Endothelial cell of umbilical vein (primary cell): ENCODE measurements at regions of chr9 and their contacts with region 1.

Region 1: GRCh38 chr9:79571309-79572031 is at the start of gene TLE4:
- DNase-seq: peak; percentile 100
- H3K4me3 ChIP-seq: peak within 1 kb of the TSS; percentile 89 to 96 (median 95)
- H3K27ac ChIP-seq: peak within 1 kb of the TSS; percentile 87
- H3K4me1 ChIP-seq: peaks cover 22% of the 10 kb centered on the region
- H3K27me3 ChIP-seq: peaks cover 2 to 8% of the 10 kb centered on the region in 2 experiments
- CTCF ChIP-seq: no peak
- POLR2A ChIP-seq: peak; percentile 97
- total RNA-seq, gene TLE4: 31.4 and 34.5 TPM in 2 replicates

Region 2: GRCh38 chr9:78296893-78297671 is 1274.4 kb before region 1 on chr9 and contains the start of gene PSAT1:
- CTCF ChIA-PET with region 1: no interaction called
- POLR2A ChIA-PET with region 1: no interaction called
- dilution Hi-C with region 1: no loop called
- intact Hi-C with region 1: loop called (anchors 5 kb)
- DNase-seq: peak; percentile 96
- H3K4me3 ChIP-seq: peak within 1 kb of the TSS; percentile 64 to 81 (median 72)
- H3K27ac ChIP-seq: peak within 1 kb of the TSS; percentile 31
- H3K4me1 ChIP-seq: peaks cover 3% of the 10 kb centered on the region
- H3K27me3 ChIP-seq: no peaks in the 10 kb centered on the region
- CTCF ChIP-seq: peak in 1 of 2 donors; percentile 5
- POLR2A ChIP-seq: peak; percentile 66
- total RNA-seq, gene PSAT1: 42.0 and 47.3 TPM in 2 replicates

Region 3: DNA sequence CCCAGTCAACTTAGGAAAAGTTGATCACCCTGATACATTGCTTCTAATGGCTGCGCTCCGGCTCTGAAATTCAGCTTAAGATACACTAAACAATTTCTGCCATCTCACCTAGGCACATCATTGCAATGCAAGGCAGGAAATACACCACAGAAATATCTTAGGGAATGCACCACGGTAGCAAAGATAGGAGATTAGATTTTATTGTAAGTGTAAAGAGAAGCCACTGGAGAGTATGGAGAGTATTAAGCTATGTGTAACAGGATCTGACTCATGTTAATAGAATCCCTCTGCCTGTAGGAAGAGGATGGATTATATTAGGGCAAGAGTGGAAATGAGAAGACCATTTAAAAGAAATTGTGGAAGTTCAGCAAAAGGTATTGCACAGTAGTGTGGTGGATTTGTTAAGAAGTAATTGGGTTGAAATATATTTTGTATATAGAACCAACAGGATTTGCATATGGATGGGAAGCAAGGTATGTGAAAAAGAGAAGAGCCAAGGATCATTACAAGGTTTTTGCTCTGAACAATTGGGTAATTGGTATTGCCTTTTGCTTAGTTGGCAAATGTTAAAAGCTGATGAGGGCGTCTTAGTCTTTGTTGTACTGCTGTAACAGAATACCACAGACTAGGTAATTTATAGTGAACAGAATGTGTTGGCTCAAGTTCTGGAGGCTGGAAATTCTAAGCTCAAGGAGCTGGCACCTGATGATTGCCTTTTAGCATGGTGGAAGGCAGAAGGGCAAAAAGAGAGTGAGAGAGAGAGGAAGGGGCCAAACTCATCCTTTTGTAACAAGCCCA is 638.4 kb before region 1 on chr9:
- CTCF ChIA-PET with region 1: no interaction called
- POLR2A ChIA-PET with region 1: no interaction called
- dilution Hi-C with region 1: no loop called
- intact Hi-C with region 1: loop called (anchors 2 kb)
- DNase-seq: peak; percentile 74
- H3K4me3 ChIP-seq: no peak overlapping the region
- H3K27ac ChIP-seq: peak overlapping the region; percentile 90
- H3K4me1 ChIP-seq: peaks cover 19% of the 10 kb centered on the region
- H3K27me3 ChIP-seq: no peaks in the 10 kb centered on the region
- CTCF ChIP-seq: no peak
- POLR2A ChIP-seq: no peak

Region 4: DNA sequence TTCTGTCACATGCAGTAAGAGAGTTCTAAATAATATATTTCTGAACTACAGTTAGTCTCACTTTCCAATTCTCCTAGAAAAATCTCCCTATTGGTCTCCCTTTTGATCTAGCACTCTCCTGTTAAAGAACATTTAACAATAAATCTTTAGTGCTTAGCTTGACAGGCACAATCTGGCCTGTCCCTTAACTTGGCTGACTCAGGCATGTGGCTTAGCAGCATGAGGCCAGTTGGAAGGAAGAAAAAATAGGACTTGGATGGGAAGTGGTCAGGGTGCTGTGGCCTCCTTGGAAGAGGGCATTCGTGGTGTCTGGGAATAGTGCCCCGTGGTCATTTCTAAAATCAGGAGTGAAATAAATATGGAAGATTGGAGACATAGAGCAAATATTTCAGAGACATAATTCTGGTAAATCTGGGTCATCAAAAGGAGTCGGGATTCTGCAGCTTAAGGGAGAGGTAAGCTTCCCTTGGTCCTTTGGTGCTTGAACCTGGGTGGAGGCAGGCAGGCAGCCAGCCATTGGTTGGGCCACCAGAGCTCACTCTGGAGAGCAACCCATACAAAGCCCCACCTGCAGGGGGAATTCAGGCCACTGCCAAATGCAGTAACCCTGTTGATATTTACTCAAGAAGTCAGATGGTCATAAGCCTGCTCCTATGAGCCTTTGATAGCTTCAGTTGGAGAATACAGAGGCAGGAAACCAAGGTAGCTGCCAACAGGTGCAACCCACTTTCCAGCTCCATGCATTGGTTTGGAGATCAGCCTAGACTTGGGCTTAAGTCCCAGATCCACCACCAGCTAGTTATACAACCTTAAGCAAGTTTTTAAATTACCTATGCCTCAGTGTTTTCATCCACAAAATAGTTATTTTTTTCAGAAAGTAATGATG is 28.5 kb before region 1 on chr9:
- CTCF ChIA-PET with region 1: no interaction called
- POLR2A ChIA-PET with region 1: no interaction called
- dilution Hi-C with region 1: no loop called
- intact Hi-C with region 1: no loop called
- DNase-seq: no peak
- H3K4me3 ChIP-seq: no peak overlapping the region
- H3K27ac ChIP-seq: no peak overlapping the region
- H3K4me1 ChIP-seq: no peaks in the 10 kb centered on the region
- H3K27me3 ChIP-seq: no peaks in the 10 kb centered on the region
- CTCF ChIP-seq: no peak
- POLR2A ChIP-seq: no peak

Region 5: DNA sequence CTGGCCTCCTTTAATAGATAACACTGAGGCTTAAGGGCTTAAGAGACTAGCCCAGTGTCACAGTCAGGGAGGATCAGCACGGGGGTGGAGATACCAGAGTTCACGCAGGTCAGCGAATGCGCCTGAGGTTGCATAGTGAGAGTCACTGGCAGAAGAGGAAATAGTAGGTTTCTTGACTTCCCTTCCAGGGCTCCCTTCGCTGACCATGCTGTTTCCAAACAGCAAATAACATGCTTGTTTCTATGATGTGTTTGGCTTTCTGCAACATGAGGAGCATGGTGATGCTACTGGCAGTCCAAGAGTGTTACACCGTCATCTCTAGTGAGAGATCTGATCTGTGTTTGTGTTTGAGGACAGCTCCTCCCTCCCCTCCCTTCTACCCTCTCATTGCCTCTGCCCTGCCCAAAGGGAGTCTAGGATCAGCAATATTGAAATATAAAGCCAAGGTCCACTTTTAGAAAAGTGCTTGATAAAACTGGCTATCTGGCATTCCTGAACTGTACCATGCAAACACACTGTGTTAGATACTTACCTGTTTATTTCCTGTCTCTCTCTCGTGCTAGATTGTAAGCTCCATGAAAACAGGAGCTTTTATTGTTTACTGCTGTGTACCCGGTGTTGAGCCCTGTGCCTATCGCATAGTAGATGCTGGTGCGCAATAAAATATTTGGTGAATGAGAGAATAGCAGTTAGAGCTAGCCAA is 12.6 kb after region 1 on chr9:
- CTCF ChIA-PET with region 1: interaction called, 5 read pairs
- POLR2A ChIA-PET with region 1: interaction called, 29 read pairs
- dilution Hi-C with region 1: no loop called
- intact Hi-C with region 1: loop called (anchors 1 kb)
- DNase-seq: no peak
- H3K4me3 ChIP-seq: no peak overlapping the region
- H3K27ac ChIP-seq: no peak overlapping the region
- H3K4me1 ChIP-seq: peaks cover 20% of the 10 kb centered on the region
- H3K27me3 ChIP-seq: no peaks in the 10 kb centered on the region
- CTCF ChIP-seq: no peak
- POLR2A ChIP-seq: no peak

Region 6: DNA sequence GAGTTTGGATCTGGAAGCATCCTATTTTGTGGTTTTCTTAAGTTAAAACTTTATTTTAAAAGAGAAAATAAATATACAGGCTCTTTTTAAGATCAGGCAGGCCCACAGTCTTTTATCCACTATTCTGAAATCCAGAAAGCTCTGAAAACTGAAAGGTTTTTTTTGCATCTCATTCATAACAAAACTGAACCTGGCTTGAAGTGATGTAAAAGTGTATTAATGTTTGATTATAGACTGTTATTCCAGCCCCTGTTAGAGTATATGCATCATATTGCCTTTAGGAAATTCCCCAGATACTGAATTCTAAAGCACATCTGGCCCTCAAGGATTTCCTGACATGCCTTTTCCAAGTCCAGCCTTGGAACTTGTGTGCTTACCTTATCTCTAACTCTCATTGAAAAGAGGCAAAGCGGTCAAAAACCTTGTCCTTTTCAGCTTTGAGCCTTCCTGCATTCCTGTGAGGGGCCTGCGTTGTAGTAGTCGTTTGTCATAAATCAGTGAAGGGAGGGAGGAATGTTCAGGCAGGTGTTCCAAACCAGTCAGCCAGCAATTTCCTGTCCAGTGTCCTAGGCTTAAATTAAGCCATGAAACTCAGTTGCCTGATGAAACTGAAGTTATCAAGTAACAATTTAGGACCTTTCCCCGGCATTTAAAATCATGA is 110.7 kb after region 1 on chr9:
- CTCF ChIA-PET with region 1: no interaction called
- POLR2A ChIA-PET with region 1: no interaction called
- dilution Hi-C with region 1: no loop called
- intact Hi-C with region 1: loop called (anchors 1 kb)
- DNase-seq: peak; percentile 79
- H3K4me3 ChIP-seq: no peak overlapping the region
- H3K27ac ChIP-seq: peak overlapping the region; percentile 45
- H3K4me1 ChIP-seq: peaks cover 14% of the 10 kb centered on the region
- H3K27me3 ChIP-seq: no peaks in the 10 kb centered on the region
- CTCF ChIP-seq: no peak
- POLR2A ChIP-seq: no peak

Region 7: DNA sequence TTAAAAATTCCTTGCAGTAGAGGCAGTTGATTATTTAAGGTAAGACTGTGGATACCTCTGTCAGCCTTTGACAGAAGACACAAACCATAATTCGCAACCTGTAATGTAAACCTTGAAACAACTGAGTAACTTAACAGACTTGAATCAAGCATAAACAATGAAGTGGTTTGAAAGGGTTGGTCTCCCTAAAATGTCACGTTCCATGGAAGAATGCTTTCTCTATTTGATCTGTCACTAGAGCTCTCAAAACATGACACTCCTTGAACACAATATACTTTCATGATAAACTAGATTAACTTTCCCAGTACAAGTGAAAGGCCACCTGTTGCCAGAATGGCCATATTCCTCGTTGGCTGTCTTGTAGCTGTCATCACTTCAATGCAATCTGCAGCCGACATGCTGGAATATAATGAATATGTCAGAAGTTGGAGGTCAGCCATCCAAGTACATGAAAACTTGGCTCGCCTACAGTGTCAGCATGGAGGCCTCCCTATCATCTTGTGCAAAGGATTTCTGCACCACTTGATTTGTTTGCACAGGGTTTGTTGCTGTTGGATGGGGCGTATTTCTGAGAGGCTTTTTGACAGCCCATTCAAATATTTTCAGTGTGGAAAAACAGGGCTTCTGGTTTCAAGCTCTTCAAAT is 228.3 kb after region 1 on chr9:
- CTCF ChIA-PET with region 1: no interaction called
- POLR2A ChIA-PET with region 1: interaction called, 4 read pairs
- dilution Hi-C with region 1: no loop called
- intact Hi-C with region 1: loop called (anchors 2 kb)
- DNase-seq: peak; percentile 86
- H3K4me3 ChIP-seq: no peak overlapping the region
- H3K27ac ChIP-seq: no peak overlapping the region
- H3K4me1 ChIP-seq: peaks cover 17% of the 10 kb centered on the region
- H3K27me3 ChIP-seq: no peaks in the 10 kb centered on the region
- CTCF ChIP-seq: no peak
- POLR2A ChIP-seq: no peak

Region 8: GRCh38 chr9:80175286-80176150 is 604.0 kb after region 1 on chr9:
- CTCF ChIA-PET with region 1: no interaction called
- POLR2A ChIA-PET with region 1: no interaction called
- dilution Hi-C with region 1: no loop called
- intact Hi-C with region 1: loop called (anchors 1 kb)
- DNase-seq: peak; percentile 45
- H3K4me3 ChIP-seq: no peak overlapping the region
- H3K27ac ChIP-seq: no peak overlapping the region
- H3K4me1 ChIP-seq: no peaks in the 10 kb centered on the region
- H3K27me3 ChIP-seq: no peaks in the 10 kb centered on the region
- CTCF ChIP-seq: peak; percentile 33 to 40
- POLR2A ChIP-seq: no peak